ENCODE measurements at regions of chr19 and their contacts with region 1.

Region 1: DNA sequence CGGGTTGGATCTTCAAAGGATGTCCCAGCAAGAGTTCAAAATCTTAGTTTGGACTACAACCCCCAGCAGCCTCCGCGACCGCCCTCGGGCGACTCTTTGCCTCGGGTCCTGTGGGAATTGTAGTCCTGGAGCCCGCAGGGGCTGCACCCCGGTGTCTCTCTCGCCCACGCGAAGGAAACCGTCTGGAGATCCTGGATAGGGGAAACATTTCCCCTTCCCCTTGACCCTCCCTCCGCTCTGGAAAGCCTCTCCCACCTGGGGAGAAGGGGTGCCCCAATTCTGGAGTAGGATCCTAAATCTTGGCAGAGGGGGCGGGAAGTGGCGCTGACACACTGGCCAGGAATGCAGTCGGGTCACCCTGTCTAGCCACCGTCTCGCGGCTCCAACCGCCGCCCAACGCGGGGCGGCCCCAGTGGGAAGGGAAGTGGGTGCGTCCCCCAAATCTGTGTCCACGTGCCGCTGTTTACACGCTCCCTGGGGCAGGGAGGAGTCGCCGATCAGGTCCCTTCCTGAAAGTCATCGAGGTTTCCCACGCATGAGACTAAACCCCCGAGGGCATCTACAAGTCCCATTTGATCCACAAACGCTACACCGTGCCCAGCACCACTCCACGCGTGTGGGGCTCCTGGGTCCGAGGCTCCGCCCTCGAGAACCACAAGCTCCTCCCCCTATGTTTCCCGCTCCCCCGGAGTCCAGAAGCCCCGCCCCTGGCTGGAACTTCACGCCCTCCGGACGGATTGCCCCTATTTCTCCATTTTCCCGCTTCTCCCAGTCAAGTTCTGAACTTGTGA is 761 bp upstream of the PPP1R13L start:
- DNase-seq: peak; percentile 77
- H3K4me3 Mint-ChIP-seq: peak overlapping the region; percentile 98
- H3K27ac Mint-ChIP-seq: peak overlapping the region; percentile 90
- H3K4me1 Mint-ChIP-seq: peaks cover 53% of the 10 kb centered on the region
- H3K27me3 Mint-ChIP-seq: peaks cover 12% of the 10 kb centered on the region

Region 2: GRCh38 chr19:45079063-45079910 is 326.3 kb before region 1 on chr19 and contains the start of gene GEMIN7:
- intact Hi-C with region 1: loop called (anchors 5 kb)
- DNase-seq: peak; percentile 76
- H3K4me3 Mint-ChIP-seq: peak within 1 kb of the TSS; percentile 99
- H3K27ac Mint-ChIP-seq: peak within 1 kb of the TSS; percentile 94
- H3K4me1 Mint-ChIP-seq: peaks cover 40% of the 10 kb centered on the region
- H3K27me3 Mint-ChIP-seq: no peaks in the 10 kb centered on the region
- total RNA-seq, gene GEMIN7: 46.8 and 53.6 TPM in 2 replicates

Region 3: DNA sequence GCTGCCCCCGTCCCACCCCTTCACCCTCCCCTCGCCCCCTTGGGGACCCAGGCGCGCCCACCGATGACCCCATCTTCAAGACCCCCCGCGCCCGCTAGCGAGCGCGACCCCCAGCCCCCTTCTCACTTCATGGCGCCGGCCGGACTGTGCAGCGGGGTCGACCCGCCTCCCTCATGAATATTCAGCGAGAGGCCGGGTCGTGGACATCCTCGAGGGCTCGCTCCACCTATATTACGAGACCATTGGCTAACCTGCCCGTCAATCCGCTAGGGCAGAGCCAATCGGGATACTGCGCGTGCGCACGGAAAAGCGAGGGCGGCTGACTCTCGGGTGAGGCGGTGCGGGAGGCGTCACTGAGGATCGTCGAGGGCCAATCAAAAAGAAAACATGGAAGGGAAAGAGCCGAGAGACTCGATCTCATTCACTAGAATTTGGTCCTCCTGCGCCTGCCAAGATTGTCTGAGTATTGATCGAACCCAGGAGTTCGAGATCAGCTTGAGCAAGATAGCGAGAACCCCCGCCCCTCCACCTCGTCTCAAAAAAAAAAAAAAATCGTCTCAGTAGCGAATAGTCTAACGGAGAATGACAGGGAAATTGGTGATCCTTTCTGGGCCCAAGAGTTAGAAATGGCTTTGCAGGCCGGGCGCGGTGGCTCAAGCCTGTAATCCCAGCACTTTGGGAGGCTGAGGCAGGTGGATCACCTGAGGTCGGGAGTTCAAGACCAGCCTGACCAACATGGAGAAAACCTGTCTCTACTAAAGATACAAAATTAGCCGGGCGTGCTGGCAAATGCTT is 35.0 kb before region 1 on chr19 and contains the start of gene ERCC2:
- intact Hi-C with region 1: loop called (anchors 1 kb)
- DNase-seq: peak; percentile 100
- H3K4me3 Mint-ChIP-seq: peak within 1 kb of the TSS; percentile 89
- H3K27ac Mint-ChIP-seq: peak within 1 kb of the TSS; percentile 95
- H3K4me1 Mint-ChIP-seq: peaks cover 15% of the 10 kb centered on the region
- H3K27me3 Mint-ChIP-seq: no peaks in the 10 kb centered on the region
- total RNA-seq, gene ERCC2: 30.5 and 32.8 TPM in 2 replicates

Region 4: DNA sequence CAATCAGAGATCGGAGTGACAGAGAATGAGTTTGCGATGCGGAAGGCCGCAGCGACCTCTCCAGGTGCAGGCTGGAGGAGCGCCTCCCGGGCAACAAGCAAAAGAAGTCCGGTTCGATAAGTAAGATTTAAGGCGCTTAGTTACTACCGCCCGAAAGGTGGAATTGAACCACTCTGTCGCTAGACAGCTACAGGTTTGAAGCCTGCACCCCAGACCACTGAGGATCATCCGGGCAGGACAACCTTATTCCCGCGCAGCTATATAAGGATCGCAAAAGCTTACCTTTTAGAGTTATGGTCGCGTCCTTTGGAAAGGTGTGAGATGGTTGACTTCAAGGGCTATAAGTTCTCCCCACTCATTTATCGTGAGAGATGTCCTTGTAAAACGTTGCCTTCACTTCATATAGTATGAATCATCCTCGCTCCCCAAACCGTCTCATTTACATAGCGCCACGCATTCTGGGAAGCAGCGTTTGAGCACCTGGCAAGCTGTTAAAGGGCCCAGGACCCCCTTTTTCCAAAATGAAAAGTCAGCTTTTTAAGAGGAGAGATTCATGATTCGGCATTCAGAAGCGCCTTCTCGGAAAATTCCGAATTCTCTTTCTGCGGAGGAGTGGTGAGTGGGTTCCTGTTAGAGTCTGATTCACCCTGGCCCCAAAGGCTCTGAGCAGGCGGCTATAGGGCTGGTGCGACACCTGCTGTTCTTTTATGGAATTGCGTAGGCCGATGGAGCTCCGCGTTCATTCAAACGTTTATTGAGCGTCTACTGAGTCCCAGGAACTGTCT is 73.0 kb after region 1 on chr19:
- intact Hi-C with region 1: loop called (anchors 1 kb)
- DNase-seq: peak; percentile 88
- H3K4me3 Mint-ChIP-seq: peak overlapping the region; percentile 77
- H3K27ac Mint-ChIP-seq: peak overlapping the region; percentile 95
- H3K4me1 Mint-ChIP-seq: peaks cover 29% of the 10 kb centered on the region
- H3K27me3 Mint-ChIP-seq: peaks cover 38% of the 10 kb centered on the region

Region 5: DNA sequence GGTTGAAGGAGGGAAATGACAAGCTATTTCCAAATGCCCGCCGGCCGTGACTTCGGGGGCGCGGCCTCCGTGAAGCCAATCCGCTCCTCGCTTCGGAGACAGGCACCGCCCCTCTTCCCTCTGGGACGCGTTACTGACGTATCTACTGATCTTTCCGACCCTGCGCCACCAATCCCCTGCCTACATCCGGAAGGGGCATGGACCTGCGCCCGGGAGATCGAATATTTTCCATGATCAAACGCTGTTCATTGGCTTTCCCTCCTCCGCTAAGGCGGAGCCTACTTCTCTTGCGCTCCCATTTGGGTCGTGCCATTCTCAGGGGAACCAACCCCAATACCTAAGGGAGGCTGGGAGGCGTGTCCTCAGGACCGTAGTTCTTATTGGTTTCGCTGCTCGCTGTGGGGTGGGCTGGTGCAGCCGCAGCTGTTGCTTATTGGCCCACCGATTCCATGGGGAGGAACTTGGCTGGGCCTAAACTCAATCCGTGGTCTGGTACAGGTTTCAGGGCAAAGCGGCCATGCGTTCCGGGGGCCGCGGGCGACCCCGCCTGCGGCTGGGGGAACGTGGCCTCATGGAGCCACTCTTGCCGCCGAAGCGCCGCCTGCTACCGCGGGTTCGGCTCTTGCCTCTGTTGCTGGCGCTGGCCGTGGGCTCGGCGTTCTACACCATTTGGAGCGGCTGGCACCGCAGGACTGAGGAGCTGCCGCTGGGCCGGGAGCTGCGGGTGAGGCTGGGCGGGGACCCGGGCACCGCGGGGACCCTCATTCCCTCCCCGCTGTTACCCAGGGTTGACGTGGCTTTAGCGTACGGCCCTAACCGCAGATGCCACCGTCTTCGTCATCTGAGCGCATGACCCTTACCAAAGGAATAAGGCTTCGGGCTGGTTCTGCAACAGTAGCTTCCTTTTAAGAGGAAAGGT is 286.8 kb after region 1 on chr19 and contains the start of gene QPCTL:
- intact Hi-C with region 1: loop called (anchors 1 kb)
- DNase-seq: peak; percentile 97
- H3K4me3 Mint-ChIP-seq: peak within 1 kb of the TSS; percentile 98
- H3K27ac Mint-ChIP-seq: peak within 1 kb of the TSS; percentile 99
- H3K4me1 Mint-ChIP-seq: peaks cover 5% of the 10 kb centered on the region
- H3K27me3 Mint-ChIP-seq: no peaks in the 10 kb centered on the region
- total RNA-seq, gene QPCTL: 13.7 and 18.0 TPM in 2 replicates

Region 6: GRCh38 chr19:45994989-45995714 is 589.5 kb after region 1 on chr19 and contains the start of gene CCDC61:
- intact Hi-C with region 1: loop called (anchors 10 kb)
- DNase-seq: peak; percentile 96
- H3K4me3 Mint-ChIP-seq: no peak within 1 kb of the TSS
- H3K27ac Mint-ChIP-seq: no peak within 1 kb of the TSS
- H3K4me1 Mint-ChIP-seq: peaks cover 17% of the 10 kb centered on the region
- H3K27me3 Mint-ChIP-seq: peaks cover 4% of the 10 kb centered on the region
- total RNA-seq, gene CCDC61: 24.0 and 24.1 TPM in 2 replicates

Measured in activated T-helper 1 cell treated with anti-CD3 and anti-CD28 coated beads, Interleukin-12 subunit alpha, Interleukin-12 subunit beta, Interleukin-2, Interleukin-4 antibody, amounts not matched to agents 30 ng/mL and 10 ng/mL and 1 ng/mL, durations not matched to agents 14 hours and 24 hours and 36 hours (primary cell).